ENCODE measurements at regions of chr11 and their contacts with region 1.

Region 1: DNA sequence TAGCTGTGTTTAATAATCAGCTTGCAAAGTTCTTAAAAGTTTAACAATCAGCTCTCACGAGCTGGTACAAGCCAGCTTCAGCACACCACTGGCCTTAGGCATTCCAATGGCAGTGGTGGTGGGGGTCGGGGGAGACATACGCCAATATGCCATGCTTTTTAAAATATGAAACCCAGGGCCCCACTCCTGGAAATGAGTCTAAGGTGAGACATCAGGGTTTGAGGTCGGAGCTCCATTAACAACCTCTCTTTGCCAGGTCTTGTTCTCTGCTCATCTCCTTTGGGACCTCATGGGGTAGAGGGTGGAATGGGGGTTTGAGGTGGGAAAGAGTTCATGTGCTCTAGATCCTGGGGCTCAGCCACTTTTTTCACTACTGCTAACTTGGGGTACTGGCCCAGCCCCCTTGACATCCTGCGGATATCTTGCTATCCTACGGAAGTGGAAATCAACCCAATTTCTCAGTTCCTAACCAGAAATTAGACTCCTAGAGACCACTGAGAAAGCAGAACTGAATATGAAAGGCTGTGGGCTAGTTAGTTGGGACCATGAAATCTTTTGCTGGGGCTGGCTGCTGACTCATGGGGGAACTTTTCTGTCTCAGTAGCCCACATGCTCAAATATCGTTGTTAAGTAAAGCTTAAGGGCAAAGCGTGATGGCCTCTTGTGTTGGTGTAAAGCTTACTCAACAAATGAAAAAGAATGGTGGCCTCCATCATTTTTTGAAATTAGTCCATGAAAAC is 90.1 kb downstream of the PDHX start:
- DNase-seq: no peak
- H3K4me3 Mint-ChIP-seq: no peak overlapping the region
- H3K27ac Mint-ChIP-seq: peak overlapping the region; percentile 86
- H3K4me1 Mint-ChIP-seq: peaks cover 73% of the 10 kb centered on the region
- H3K27me3 Mint-ChIP-seq: no peaks in the 10 kb centered on the region
- CTCF ChIP-seq: no peak

Region 2: DNA sequence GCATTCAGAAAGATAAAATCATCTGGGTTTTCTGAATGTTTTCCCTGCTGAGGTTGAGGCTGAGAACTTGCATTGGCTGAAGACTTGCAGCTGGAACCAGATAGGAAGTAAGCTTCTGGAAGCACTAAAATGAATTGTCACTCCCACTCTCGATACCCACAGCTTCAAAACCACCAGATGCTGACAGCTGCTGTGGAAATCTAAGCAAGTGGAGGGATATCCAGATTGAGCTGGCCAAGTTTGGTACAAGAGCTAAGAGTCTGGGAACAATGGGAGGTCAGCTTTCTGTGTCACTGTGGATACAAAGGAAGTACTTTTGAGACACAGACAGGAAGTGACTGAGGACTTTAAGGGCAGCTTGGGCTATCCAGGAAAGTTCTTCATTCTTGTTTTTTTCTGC is 81.1 kb after region 1 on chr11:
- CTCF ChIA-PET with region 1: interaction called, 3 read pairs
- intact Hi-C with region 1: loop called (anchors 5 kb)
- DNase-seq: no peak
- H3K4me3 Mint-ChIP-seq: no peak overlapping the region
- H3K27ac Mint-ChIP-seq: no peak overlapping the region
- H3K4me1 Mint-ChIP-seq: peaks cover 29% of the 10 kb centered on the region
- H3K27me3 Mint-ChIP-seq: no peaks in the 10 kb centered on the region
- CTCF ChIP-seq: no peak

Region 3: DNA sequence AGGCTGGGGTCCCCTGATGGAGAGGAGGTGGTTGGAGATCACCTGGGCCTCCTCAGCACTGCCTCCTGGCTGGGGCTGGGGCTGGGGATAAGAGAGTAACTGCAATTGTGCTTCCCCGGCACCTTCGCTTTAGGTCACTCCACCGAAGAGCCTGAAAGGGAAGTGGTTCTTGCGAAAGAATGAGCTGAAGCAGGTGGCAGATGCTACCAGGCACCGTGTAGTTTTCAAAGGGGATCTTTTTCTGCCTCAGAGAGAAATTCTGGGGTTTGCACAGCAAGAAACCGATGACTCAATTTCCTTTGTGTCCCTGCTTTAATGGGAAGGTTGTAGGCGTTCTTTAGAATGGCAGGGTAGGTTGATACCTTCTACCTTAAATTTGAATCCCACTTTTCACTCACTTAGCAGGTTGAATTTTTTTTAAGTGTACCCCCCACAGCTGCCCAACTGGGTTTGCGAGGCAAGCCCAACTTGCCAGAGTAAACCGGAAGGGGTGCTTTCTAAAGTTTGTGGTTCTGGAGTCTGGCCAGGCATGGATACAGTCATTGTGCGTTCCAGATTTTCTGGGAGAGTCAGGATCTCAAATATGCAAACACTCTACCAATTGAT is 137.7 kb after region 1 on chr11:
- CTCF ChIA-PET with region 1: interaction called, 26 read pairs
- intact Hi-C with region 1: loop called (anchors 1 kb)
- DNase-seq: peak; percentile 24
- H3K4me3 Mint-ChIP-seq: peak overlapping the region; percentile 87
- H3K27ac Mint-ChIP-seq: peak overlapping the region; percentile 84
- H3K4me1 Mint-ChIP-seq: peaks cover 60% of the 10 kb centered on the region
- H3K27me3 Mint-ChIP-seq: no peaks in the 10 kb centered on the region
- CTCF ChIP-seq: no peak

Region 4: GRCh38 chr11:35173011-35173511 is 166.5 kb after region 1 on chr11:
- CTCF ChIA-PET with region 1: interaction called, 12 read pairs
- intact Hi-C with region 1: loop called (anchors 2 kb)
- DNase-seq: peak; percentile 68
- H3K4me3 Mint-ChIP-seq: peak overlapping the region; percentile 34
- H3K27ac Mint-ChIP-seq: peak overlapping the region; percentile 92
- H3K4me1 Mint-ChIP-seq: peaks cover 74% of the 10 kb centered on the region
- H3K27me3 Mint-ChIP-seq: no peaks in the 10 kb centered on the region
- CTCF ChIP-seq: no peak